ENCODE measurements at regions of chr11 and their contacts with region 1.

Region 1: DNA sequence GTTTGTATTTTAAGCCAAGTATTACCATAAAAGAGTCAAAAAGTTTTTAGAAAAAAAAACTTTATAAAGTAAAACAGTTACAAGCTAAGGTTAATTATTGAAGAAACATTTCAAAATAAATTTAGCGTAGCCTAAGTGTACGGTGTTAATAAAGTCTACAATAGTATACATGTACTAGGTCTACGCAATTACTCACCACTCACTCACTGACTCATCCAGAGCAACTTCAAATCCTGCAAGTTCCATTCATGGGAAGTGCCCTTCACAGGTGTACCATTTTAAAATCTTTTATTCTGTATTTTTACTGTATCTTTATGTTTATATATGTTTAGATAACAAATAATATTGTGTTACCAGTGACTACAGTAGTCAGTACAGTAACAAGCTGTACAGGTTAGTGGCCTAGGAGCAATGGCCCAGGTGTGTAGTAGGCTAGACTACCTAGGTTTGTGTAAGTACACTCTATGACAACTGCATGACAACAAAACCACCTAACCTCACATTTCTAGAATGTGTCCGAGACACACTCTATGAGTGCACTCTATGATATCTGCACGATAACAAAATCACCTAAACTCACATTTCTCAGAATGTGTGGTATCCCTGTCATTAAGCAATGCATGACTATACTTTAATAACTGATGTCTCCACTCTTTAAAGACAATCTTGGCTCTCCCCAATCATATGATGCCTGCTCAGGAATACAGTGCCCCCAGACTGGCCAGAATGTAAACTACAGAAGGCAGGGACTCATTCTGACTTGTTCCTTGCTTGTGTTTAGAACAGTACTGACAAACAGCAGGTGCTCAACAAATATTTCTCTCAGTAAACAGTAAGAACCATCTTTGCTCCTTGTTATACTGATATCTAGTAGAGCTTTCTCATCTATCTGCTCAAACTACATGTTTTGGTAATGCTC is 21.2 kb downstream of the KMT5B start:
- DNase-seq: peak; percentile 45
- H3K4me3 ChIP-seq: no peak overlapping the region
- H3K27ac ChIP-seq: no peak overlapping the region
- H3K4me1 ChIP-seq: peaks cover 5% of the 10 kb centered on the region
- H3K27me3 ChIP-seq: no peaks in the 10 kb centered on the region
- CTCF ChIP-seq: no peak

Region 2: GRCh38 chr11:68127714-68128681 is 63.9 kb before region 1 on chr11:
- CTCF ChIA-PET with region 1: no interaction called
- dilution Hi-C with region 1: no loop called
- in situ Hi-C with region 1: no loop called
- intact Hi-C with region 1: no loop called
- DNase-seq: no peak
- H3K4me3 ChIP-seq: no peak overlapping the region
- H3K27ac ChIP-seq: no peak overlapping the region
- H3K4me1 ChIP-seq: peaks cover 5% of the 10 kb centered on the region
- H3K27me3 ChIP-seq: no peaks in the 10 kb centered on the region
- CTCF ChIP-seq: no peak

Region 3: GRCh38 chr11:68150039-68150438 is 41.9 kb before region 1 on chr11:
- CTCF ChIA-PET with region 1: no interaction called
- dilution Hi-C with region 1: loop called (anchors 5 kb)
- in situ Hi-C with region 1: no loop called
- intact Hi-C with region 1: no loop called
- DNase-seq: peak; percentile 65
- H3K4me3 ChIP-seq: no peak overlapping the region
- H3K27ac ChIP-seq: no peak overlapping the region
- H3K4me1 ChIP-seq: peaks cover 5% of the 10 kb centered on the region
- H3K27me3 ChIP-seq: no peaks in the 10 kb centered on the region
- CTCF ChIP-seq: no peak

Region 4: DNA sequence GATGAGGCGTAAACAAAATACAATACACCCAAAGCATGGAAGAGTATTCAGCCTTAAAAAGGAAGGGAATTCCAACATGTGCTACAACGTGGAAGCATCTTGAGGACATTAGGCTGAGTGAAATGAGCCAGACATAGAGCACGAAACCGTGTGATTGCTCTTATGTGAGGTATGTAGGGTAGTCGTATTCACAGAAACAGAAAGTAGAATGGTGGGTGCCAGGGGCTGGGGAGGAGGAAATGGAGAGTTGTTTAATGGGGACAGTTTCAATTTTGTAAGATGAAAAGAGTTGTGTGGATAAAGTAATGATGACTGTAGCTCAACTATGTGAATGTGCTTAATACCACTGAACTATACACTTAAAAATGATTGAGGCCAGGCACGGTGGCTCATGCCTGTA is 31.4 kb after region 1 on chr11:
- CTCF ChIA-PET with region 1: no interaction called
- dilution Hi-C with region 1: no loop called
- in situ Hi-C with region 1: no loop called
- intact Hi-C with region 1: no loop called
- DNase-seq: no peak
- H3K4me3 ChIP-seq: no peak overlapping the region
- H3K27ac ChIP-seq: no peak overlapping the region
- H3K4me1 ChIP-seq: no peaks in the 10 kb centered on the region
- H3K27me3 ChIP-seq: no peaks in the 10 kb centered on the region
- CTCF ChIP-seq: no peak